Breast epithelium (tissue), 4 donors: ENCODE measurements at regions of chr9 and their contacts with region 1.

Region 1: DNA sequence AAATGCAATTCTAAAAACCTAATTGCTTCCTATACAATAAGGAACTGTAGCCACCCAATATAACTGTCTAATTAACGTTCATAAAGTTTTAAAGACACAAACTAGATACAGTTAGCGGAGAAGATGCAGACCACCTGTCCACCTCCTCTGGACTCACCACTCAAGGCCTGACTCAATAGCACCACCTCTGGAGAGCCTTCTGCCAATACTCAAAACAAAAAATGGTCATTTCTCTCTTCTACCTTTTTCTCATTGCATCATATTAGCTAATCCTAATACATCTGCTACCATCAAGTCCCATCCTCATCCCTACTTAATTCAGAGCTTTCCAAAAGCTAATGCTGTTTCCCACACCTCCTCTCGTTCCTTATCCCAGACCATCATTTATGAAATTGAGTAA is 159.9 kb downstream of the MLLT3 start:
- DNase-seq: no peak
- H3K4me3 ChIP-seq: no peak overlapping the region
- H3K27ac ChIP-seq: no peak overlapping the region
- H3K4me1 ChIP-seq: no peaks in the 10 kb centered on the region
- H3K27me3 ChIP-seq: no peaks in the 10 kb centered on the region
- CTCF ChIP-seq: no peak
- POLR2A ChIP-seq: no peak

Region 2: GRCh38 chr9:20054734-20055133 is 407.7 kb before region 1 on chr9:
- intact Hi-C with region 1: loop called (anchors 5 kb)
- DNase-seq: no peak
- H3K4me3 ChIP-seq: no peak overlapping the region
- H3K27ac ChIP-seq: no peak overlapping the region
- H3K4me1 ChIP-seq: no peaks in the 10 kb centered on the region
- H3K27me3 ChIP-seq: no peaks in the 10 kb centered on the region
- CTCF ChIP-seq: no peak
- POLR2A ChIP-seq: no peak

Region 3: GRCh38 chr9:20242510-20243189 is 219.8 kb before region 1 on chr9:
- intact Hi-C with region 1: no loop called
- DNase-seq: no peak
- H3K4me3 ChIP-seq: no peak overlapping the region
- H3K27ac ChIP-seq: no peak overlapping the region
- H3K4me1 ChIP-seq: no peaks in the 10 kb centered on the region
- H3K27me3 ChIP-seq: no peaks in the 10 kb centered on the region
- CTCF ChIP-seq: no peak
- POLR2A ChIP-seq: no peak